ENCODE measurements at regions of chr12 and their contacts with region 1.

Region 1: GRCh38 chr12:101759396-101760047 is 20.3 kb upstream of the SYCP3 start:
- DNase-seq: peak; percentile 35
- ATAC-seq: peak; percentile 75
- H3K4me3 ChIP-seq: no peak overlapping the region
- H3K27ac ChIP-seq: no peak overlapping the region
- H3K4me1 ChIP-seq: no peaks in the 10 kb centered on the region
- H3K27me3 ChIP-seq: no peaks in the 10 kb centered on the region
- CTCF ChIP-seq: peak; percentile 73
- POLR2A ChIP-seq: no peak
- RAD21 ChIP-seq: peak; percentile 65

Region 2: GRCh38 chr12:101490286-101490920 is 269.1 kb before region 1 on chr12:
- CTCF ChIA-PET with region 1: no interaction called
- POLR2A ChIA-PET with region 1: no interaction called
- dilution Hi-C with region 1: no loop called
- in situ Hi-C with region 1: no loop called
- intact Hi-C with region 1: loop called (anchors 5 kb)
- DNase-seq: no peak
- ATAC-seq: peak; percentile 49; the same call in 1 of the 2 replicates
- H3K4me3 ChIP-seq: no peak overlapping the region
- H3K27ac ChIP-seq: no peak overlapping the region
- H3K4me1 ChIP-seq: no peaks in the 10 kb centered on the region
- H3K27me3 ChIP-seq: no peaks in the 10 kb centered on the region
- CTCF ChIP-seq: no peak
- POLR2A ChIP-seq: no peak
- RAD21 ChIP-seq: no peak

Region 3: GRCh38 chr12:101570047-101570446 is 189.5 kb before region 1 on chr12:
- CTCF ChIA-PET with region 1: no interaction called
- POLR2A ChIA-PET with region 1: no interaction called
- dilution Hi-C with region 1: no loop called
- in situ Hi-C with region 1: no loop called
- intact Hi-C with region 1: loop called (anchors 2 kb)
- DNase-seq: peak; percentile 63
- ATAC-seq: peak; percentile 94
- H3K4me3 ChIP-seq: no peak overlapping the region
- H3K27ac ChIP-seq: no peak overlapping the region
- H3K4me1 ChIP-seq: no peaks in the 10 kb centered on the region
- H3K27me3 ChIP-seq: no peaks in the 10 kb centered on the region; the same call in 1 of the 2 replicates
- CTCF ChIP-seq: peak; percentile 39
- POLR2A ChIP-seq: no peak
- RAD21 ChIP-seq: 0 out of 2 replicates have a peak, but pooled peaks have one; percentile 12

Region 4: GRCh38 chr12:101670007-101670687 is 89.4 kb before region 1 on chr12:
- CTCF ChIA-PET with region 1: no interaction called
- POLR2A ChIA-PET with region 1: no interaction called
- dilution Hi-C with region 1: no loop called
- in situ Hi-C with region 1: no loop called
- intact Hi-C with region 1: loop called (anchors 2 kb)
- DNase-seq: peak; percentile 58
- ATAC-seq: peak; percentile 64; the same call in 1 of the 2 replicates
- H3K4me3 ChIP-seq: no peak overlapping the region
- H3K27ac ChIP-seq: no peak overlapping the region
- H3K4me1 ChIP-seq: no peaks in the 10 kb centered on the region
- H3K27me3 ChIP-seq: peaks cover 6% of the 10 kb centered on the region
- CTCF ChIP-seq: peak; percentile 61
- POLR2A ChIP-seq: no peak
- RAD21 ChIP-seq: peak; percentile 39; the same call in 1 of the 2 replicates

Measured in IMR-90 (cell line).